ENCODE measurements at regions of chr17 and their contacts with region 1.

Region 1: DNA sequence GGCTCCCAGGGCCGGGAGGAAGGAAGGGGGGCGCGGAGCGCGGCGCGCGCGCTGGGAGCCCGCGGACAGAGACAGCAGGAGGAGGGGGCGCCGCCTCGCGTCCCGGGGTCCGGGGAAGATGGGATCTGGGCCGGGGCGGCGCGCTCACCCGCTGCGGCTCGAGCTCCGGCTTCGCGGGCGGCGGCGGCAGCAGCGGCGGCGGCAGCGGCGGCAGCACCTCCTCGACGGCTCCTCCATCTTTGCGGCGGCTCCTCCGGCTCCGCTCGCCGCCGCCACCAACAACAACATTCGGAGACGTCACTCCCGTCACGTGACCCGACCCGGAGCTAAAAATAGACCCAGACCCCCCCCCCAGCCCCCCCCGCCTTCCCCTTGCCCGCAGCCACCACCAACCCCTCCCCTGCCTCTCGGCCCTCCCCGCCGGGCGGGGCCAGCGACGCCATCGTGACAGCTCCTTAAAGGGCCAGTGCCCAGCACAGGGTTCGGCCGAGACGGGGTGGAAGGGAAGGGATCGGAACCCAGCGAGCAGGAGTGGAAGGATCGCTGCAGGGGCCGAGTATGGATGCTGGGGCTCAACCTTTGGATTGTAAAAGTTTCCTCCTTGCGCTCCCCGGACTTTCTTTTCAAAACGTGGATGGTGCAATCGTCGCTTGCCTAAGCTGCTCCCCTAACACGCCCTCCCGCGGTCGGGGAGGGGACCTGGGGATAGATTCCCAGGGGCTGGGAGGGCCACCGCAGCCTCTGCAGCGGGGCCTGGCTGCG is at the start of gene HDAC5:
- DNase-seq: peak; percentile 95
- ATAC-seq: peak; percentile 86
- H3K4me3 Mint-ChIP-seq: peak within 1 kb of the TSS; percentile 91
- H3K27ac Mint-ChIP-seq: peak within 1 kb of the TSS; percentile 97
- H3K4me1 Mint-ChIP-seq: peaks cover 38% of the 10 kb centered on the region
- H3K27me3 Mint-ChIP-seq: no peaks in the 10 kb centered on the region
- CTCF ChIP-seq: no peak; the same call in 1 of the 2 replicates
- total RNA-seq, gene HDAC5: 54.0 to 61.6 TPM (median 59.0 TPM) in 3 replicates

Region 2: DNA sequence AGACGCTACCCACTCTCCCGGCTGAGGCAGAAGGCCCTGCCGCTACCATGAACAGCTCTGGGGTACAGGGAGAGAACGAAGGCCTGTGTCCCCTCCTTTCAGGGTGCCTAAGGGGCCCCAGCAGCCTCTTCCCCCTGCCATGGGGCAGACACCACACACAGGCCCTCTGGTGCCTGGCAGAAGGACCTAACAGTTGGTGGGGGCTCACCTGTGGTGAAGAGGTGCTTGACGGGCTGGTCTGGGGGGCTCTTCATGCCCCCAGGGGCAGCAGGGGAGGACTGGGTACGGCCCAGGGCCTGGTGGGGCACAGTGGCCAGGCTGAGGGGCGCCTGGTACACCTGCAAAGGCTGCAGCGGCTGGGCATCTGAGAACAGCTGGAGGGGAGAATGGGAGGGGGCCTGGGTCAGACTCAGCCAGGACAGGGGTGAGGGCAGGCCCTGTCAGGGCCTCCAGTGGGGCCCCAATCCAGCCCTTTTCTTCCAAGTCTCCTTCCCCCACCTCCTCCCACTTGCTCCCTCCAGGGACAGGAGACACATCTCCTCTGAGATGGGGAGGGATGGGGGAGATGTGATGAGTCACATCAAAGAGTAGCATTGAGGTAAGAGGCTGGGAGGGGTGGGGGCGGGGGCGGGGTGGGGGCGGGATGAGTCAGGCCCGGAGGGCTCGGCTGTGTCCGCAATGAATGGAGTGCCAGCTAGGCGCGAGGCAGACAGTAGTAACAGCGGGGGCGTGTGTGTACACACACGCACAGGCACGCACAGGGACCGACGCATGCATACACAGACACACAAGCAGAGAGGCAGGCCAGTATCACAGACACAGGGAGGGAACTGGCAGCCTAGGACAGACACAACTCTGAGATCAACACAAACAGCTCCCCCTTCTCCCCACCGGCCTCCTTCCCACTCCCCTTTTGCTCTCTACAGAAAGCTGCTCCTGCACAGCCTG is 36.9 kb before region 1 on chr17:
- CTCF ChIA-PET with region 1: interaction called, 10 read pairs
- POLR2A ChIA-PET with region 1: interaction called, 3 read pairs
- DNase-seq: no peak
- ATAC-seq: peak; percentile 35
- H3K4me3 Mint-ChIP-seq: peak overlapping the region; percentile 55
- H3K27ac Mint-ChIP-seq: peak overlapping the region; percentile 97
- H3K4me1 Mint-ChIP-seq: peaks cover 27% of the 10 kb centered on the region
- H3K27me3 Mint-ChIP-seq: no peaks in the 10 kb centered on the region
- CTCF ChIP-seq: no peak

Region 3: DNA sequence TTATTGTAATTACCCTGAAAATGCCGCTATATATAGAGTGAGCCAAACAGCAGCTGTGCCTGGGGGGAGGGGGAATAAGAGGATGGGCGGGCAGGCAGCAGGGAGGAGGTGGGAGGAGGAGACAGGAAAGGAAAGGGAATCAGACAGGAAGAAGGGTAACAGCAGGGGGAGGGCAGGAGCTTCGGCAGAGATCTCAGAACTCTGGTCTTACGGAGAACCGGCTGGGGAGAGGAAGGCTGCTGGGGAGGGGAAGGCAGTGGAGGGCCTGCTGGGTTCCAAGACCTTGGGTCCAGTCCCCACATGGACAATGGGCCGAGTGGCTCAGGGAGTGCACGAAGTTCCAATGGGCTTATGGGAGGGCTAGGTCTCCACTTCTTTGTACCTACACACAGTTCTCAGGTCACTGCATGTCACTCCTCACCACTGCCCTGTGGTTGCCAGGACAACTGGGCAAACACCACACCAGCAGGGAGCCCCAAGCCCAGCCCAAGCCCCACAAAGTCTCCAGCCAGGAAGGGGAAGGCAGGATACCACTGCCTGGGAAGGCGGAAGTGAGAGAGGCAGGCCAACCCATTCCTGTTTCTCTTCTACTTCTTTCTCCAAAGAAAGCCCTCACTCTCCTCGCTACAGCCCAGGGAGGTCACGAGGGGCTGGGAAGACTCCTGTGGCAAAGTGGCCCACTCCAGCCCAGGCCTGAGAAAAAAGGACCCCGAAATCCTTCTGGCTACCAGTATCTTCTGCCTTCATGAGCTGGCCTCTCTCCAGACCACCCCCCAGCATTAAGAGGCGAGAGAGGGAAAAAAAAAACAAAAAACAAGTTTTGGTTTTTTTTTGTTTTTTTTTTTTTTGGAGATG is 27.7 kb before region 1 on chr17:
- CTCF ChIA-PET with region 1: interaction called, 116 read pairs
- POLR2A ChIA-PET with region 1: interaction called, 6 read pairs
- DNase-seq: peak; percentile 85
- ATAC-seq: peak; percentile 86
- H3K4me3 Mint-ChIP-seq: peak overlapping the region; percentile 73
- H3K27ac Mint-ChIP-seq: peak overlapping the region; percentile 99
- H3K4me1 Mint-ChIP-seq: peaks cover 36% of the 10 kb centered on the region
- H3K27me3 Mint-ChIP-seq: no peaks in the 10 kb centered on the region
- CTCF ChIP-seq: no peak

Region 4: GRCh38 chr17:44102845-44103622 is 20.5 kb before region 1 on chr17:
- CTCF ChIA-PET with region 1: interaction called, 116 read pairs
- POLR2A ChIA-PET with region 1: interaction called, 3 read pairs
- DNase-seq: no peak
- ATAC-seq: no peak
- H3K4me3 Mint-ChIP-seq: no peak overlapping the region
- H3K27ac Mint-ChIP-seq: peak overlapping the region; percentile 95
- H3K4me1 Mint-ChIP-seq: peaks cover 17% of the 10 kb centered on the region
- H3K27me3 Mint-ChIP-seq: no peaks in the 10 kb centered on the region
- CTCF ChIP-seq: no peak

Region 5: GRCh38 chr17:44110823-44111633 is 12.5 kb before region 1 on chr17:
- CTCF ChIA-PET with region 1: interaction called, 18 read pairs
- POLR2A ChIA-PET with region 1: interaction called, 7 read pairs
- DNase-seq: peak; percentile 82
- ATAC-seq: peak; percentile 75
- H3K4me3 Mint-ChIP-seq: peak overlapping the region; percentile 49
- H3K27ac Mint-ChIP-seq: no peak overlapping the region
- H3K4me1 Mint-ChIP-seq: peaks cover 48% of the 10 kb centered on the region
- H3K27me3 Mint-ChIP-seq: no peaks in the 10 kb centered on the region
- CTCF ChIP-seq: no peak

Region 6: GRCh38 chr17:44141717-44142285 is 18.3 kb after region 1 on chr17 and contains the start of gene HROB:
- CTCF ChIA-PET with region 1: interaction called, 19 read pairs
- POLR2A ChIA-PET with region 1: interaction called, 6 read pairs
- DNase-seq: peak; percentile 100
- ATAC-seq: peak; percentile 84
- H3K4me3 Mint-ChIP-seq: peak within 1 kb of the TSS; percentile 96
- H3K27ac Mint-ChIP-seq: peak within 1 kb of the TSS; percentile 96
- H3K4me1 Mint-ChIP-seq: peaks cover 25% of the 10 kb centered on the region
- H3K27me3 Mint-ChIP-seq: no peaks in the 10 kb centered on the region; the same call in 1 of the 2 replicates
- CTCF ChIP-seq: peak; percentile 68
- total RNA-seq, gene HROB: 22.4 to 23.9 TPM (median 23.7 TPM) in 3 replicates

Region 7: DNA sequence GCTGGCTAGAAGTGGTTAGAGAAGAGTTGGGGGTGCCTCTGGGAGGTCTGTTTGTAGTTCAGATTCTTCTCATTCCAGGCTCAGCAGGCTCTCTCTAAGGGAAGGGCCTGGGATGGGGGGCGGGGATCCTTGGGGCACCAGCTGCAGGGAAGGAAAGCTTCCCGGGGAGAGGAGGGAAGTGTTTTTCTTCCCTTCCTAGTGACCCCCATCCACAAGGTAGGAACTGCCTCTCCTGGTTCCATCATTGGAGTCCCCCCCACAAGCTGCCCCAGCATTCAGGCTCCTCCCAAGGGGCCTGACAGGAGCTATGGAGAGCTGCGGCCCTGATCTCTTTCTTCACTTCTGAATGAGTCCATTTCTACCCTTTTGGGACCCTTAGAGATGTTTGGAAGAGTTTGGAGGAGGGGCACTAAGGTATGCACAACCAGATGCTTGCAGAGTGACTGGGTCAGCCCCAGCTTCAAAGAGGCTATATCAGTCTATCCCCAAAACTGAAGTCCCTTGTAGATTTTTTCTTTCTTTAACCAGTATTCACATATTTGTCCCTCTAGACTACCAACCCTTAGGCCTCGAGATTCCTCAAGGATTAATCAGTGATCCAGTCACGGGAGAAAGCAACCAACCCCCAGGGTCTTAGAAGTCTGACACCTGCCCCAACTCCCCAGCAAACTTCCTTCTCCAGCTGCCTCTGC is 419.8 kb after region 1 on chr17:
- CTCF ChIA-PET with region 1: no interaction called
- POLR2A ChIA-PET with region 1: no interaction called
- DNase-seq: peak; percentile 85
- ATAC-seq: peak; percentile 68
- H3K4me3 Mint-ChIP-seq: peak overlapping the region; percentile 60
- H3K27ac Mint-ChIP-seq: peak overlapping the region; percentile 41
- H3K4me1 Mint-ChIP-seq: peaks cover 93% of the 10 kb centered on the region
- H3K27me3 Mint-ChIP-seq: peaks cover 89% of the 10 kb centered on the region
- CTCF ChIP-seq: no peak

Measured in WTC11 (cell line).